H1 (cell line): ENCODE measurements at regions of chr16 and their contacts with region 1.

Region 1: GRCh38 chr16:5056352-5056751 is 9.4 kb downstream of the C16orf89 start:
- DNase-seq: peak in 1 of 2 experiments; percentile 81
- H3K4me3 ChIP-seq: no peak overlapping the region
- H3K27ac ChIP-seq: no peak overlapping the region
- H3K4me1 ChIP-seq: peaks cover 0 to 21% (median 14%) of the 10 kb centered on the region in 4 experiments; a peak in 6 of 7 replicates
- H3K27me3 ChIP-seq: no peaks in the 10 kb centered on the region
- CTCF ChIP-seq: peak; percentile 90 to 94 (median 94)
- EP300 ChIP-seq: no peak
- POLR2A ChIP-seq: no peak
- RAD21 ChIP-seq: peak; percentile 87 to 94

Region 2: GRCh38 chr16:5025171-5025632 is 31.1 kb before region 1 on chr16:
- CTCF ChIA-PET with region 1: interaction called, 25 read pairs
- POLR2A ChIA-PET with region 1: interaction called, 3 read pairs
- DNase-seq: peak; percentile 39 to 86
- H3K4me3 ChIP-seq: no peak overlapping the region
- H3K27ac ChIP-seq: no peak overlapping the region
- H3K4me1 ChIP-seq: peaks cover 0 to 4% (median 1%) of the 10 kb centered on the region in 4 experiments; a peak in 3 of 7 replicates
- H3K27me3 ChIP-seq: no peaks in the 10 kb centered on the region
- CTCF ChIP-seq: peak; percentile 71 to 86 (median 80)
- EP300 ChIP-seq: no peak
- POLR2A ChIP-seq: no peak
- RAD21 ChIP-seq: peak; percentile 63 to 73

Region 3: GRCh38 chr16:5033256-5034169 is 22.8 kb before region 1 on chr16 and contains the start of gene NAGPA:
- CTCF ChIA-PET with region 1: interaction called, 25 read pairs
- POLR2A ChIA-PET with region 1: interaction called, 3 read pairs
- DNase-seq: peak; percentile 54 to 92
- H3K4me3 ChIP-seq: peak within 1 kb of the TSS; percentile 67 to 84 (median 80)
- H3K27ac ChIP-seq: no peak within 1 kb of the TSS; the same call in 1 of the 2 replicates
- H3K4me1 ChIP-seq: peaks cover 2 to 11% (median 8%) of the 10 kb centered on the region in 4 experiments
- H3K27me3 ChIP-seq: peaks cover 0 to 6% (median 5%) of the 10 kb centered on the region in 4 experiments; a peak in 3 of 7 replicates
- CTCF ChIP-seq: no peak
- EP300 ChIP-seq: peak in 1 of 2 experiments; percentile 86; a peak in 2 of 3 replicates
- POLR2A ChIP-seq: peak in 1 of 2 experiments; percentile 81; a peak in 2 of 3 replicates
- RAD21 ChIP-seq: peak in 1 of 2 experiments; percentile 21; a peak in 1 of 4 replicates
- total RNA-seq, gene NAGPA: 13.2 and 13.6 TPM in 2 replicates

Region 4: GRCh38 chr16:5041600-5042133 is 14.7 kb before region 1 on chr16:
- CTCF ChIA-PET with region 1: interaction called, 111 read pairs
- POLR2A ChIA-PET with region 1: interaction called, 8 read pairs
- DNase-seq: no peak
- H3K4me3 ChIP-seq: no peak overlapping the region
- H3K27ac ChIP-seq: no peak overlapping the region
- H3K4me1 ChIP-seq: peaks cover 0 to 1% (median 1%) of the 10 kb centered on the region in 4 experiments; a peak in 6 of 7 replicates
- H3K27me3 ChIP-seq: no peaks in the 10 kb centered on the region
- CTCF ChIP-seq: no peak
- EP300 ChIP-seq: no peak
- POLR2A ChIP-seq: no peak
- RAD21 ChIP-seq: no peak

Region 5: GRCh38 chr16:5071681-5072333 is 15.5 kb after region 1 on chr16 and contains the start of gene ALG1:
- CTCF ChIA-PET with region 1: interaction called, 625 read pairs
- POLR2A ChIA-PET with region 1: interaction called, 17 read pairs
- DNase-seq: peak in 1 of 2 experiments; percentile 94
- H3K4me3 ChIP-seq: peak within 1 kb of the TSS; percentile 59 to 87 (median 77)
- H3K27ac ChIP-seq: peak within 1 kb of the TSS; percentile 50
- H3K4me1 ChIP-seq: peaks cover 0 to 6% (median 5%) of the 10 kb centered on the region in 4 experiments; a peak in 5 of 7 replicates
- H3K27me3 ChIP-seq: 0 out of 7 replicates have a peak, but pooled peaks cover 0 to 3% (median 0%) of the 10 kb centered on the region in 4 experiments
- CTCF ChIP-seq: 0 out of 4 replicates have a peak, but pooled peaks of 1 of the 3 experiments have one; percentile 0
- EP300 ChIP-seq: no peak
- POLR2A ChIP-seq: peak; percentile 95 to 96
- RAD21 ChIP-seq: no peak
- total RNA-seq, gene ALG1: 34.8 and 35.7 TPM in 2 replicates

Region 6: DNA sequence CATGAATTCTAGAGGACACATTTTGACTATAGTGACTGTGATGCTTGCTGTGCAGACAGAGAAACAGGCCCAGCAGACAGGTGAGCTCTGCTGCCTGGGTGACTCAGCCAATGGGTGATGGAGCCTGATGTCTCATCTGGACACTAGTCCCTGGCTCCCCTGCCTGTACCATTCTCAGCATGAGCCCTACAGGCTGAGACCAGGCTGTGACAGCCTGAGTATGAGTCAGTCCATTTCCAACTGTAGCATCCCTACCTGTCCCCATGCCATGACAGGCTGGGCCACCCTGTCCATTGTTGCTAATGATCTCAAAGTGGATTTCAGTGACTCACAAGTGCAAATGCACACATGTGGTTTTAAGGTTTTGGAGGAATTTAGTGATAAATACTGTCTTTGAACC is 143.8 kb after region 1 on chr16:
- CTCF ChIA-PET with region 1: no interaction called
- POLR2A ChIA-PET with region 1: no interaction called
- DNase-seq: no peak
- H3K4me3 ChIP-seq: no peak overlapping the region
- H3K27ac ChIP-seq: no peak overlapping the region
- H3K4me1 ChIP-seq: no peaks in the 10 kb centered on the region
- H3K27me3 ChIP-seq: no peaks in the 10 kb centered on the region
- CTCF ChIP-seq: no peak
- EP300 ChIP-seq: no peak
- POLR2A ChIP-seq: no peak
- RAD21 ChIP-seq: no peak